RWPE1 (cell line): ENCODE measurements at regions of chr2 and their contacts with region 1.

Region 1: DNA sequence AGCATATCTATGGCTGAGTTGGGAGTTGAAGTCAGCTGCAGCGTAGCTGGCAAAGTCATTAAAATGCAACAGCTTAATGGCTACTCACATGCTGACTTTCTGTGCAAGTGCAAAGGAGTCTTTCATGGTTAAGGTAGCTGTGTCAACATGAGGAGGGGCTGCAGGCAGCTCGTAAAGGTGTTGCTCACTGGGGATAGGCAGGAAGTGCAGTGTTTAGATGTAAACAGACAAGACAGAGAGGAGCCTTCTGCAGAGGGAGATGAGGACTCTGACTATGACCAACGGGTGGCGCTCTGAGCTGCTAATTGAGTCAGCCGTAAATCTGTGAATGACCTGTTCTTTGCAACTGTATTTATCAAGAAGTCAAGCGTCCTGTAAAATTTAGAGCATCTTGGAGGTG is 22.3 kb upstream of the CAVIN2 start:
- DNase-seq: no peak
- H3K27ac ChIP-seq: no peak overlapping the region
- CTCF ChIP-seq: no peak

Region 2: DNA sequence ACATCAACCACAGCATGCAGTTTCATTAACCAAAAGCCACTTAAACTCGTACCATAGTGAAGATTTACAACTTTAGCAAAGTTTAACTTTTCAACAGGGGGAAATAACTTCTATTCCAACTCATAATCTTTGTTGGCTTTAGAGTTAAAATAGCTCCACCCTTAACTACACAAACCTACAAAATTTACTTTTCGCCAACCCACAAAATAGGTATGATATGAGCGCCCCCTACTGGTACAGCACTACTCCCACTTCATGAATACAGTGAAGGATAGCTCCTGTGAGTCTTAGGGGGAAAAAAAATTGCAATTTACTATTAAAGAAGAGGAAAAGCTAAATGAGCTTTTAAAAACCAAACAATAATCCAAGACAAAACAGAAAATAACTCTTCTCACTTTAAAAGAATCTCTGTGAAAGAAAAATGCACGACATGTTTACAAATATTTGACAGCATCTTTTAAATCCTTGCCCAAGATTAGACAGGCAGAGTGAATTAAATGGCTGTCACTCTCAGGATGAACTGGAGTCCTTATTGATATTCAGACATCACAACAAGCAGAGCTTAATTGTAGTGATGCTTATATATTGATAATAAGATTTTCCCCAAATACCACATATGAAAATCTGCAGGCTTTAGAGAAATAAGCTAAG is 293.3 kb after region 1 on chr2:
- CTCF ChIA-PET with region 1: interaction called, 18 read pairs
- POLR2A ChIA-PET with region 1: no interaction called
- DNase-seq: peak; percentile 41
- H3K27ac ChIP-seq: no peak overlapping the region
- CTCF ChIP-seq: peak; percentile 89

Region 3: GRCh38 chr2:192940770-192941169 is 1071.6 kb after region 1 on chr2:
- CTCF ChIA-PET with region 1: interaction called, 10 read pairs
- POLR2A ChIA-PET with region 1: no interaction called
- DNase-seq: no peak
- H3K27ac ChIP-seq: no peak overlapping the region
- CTCF ChIP-seq: no peak